AG04449 (cell line): ENCODE measurements at regions of chr12 and their contacts with region 1.

Region 1: DNA sequence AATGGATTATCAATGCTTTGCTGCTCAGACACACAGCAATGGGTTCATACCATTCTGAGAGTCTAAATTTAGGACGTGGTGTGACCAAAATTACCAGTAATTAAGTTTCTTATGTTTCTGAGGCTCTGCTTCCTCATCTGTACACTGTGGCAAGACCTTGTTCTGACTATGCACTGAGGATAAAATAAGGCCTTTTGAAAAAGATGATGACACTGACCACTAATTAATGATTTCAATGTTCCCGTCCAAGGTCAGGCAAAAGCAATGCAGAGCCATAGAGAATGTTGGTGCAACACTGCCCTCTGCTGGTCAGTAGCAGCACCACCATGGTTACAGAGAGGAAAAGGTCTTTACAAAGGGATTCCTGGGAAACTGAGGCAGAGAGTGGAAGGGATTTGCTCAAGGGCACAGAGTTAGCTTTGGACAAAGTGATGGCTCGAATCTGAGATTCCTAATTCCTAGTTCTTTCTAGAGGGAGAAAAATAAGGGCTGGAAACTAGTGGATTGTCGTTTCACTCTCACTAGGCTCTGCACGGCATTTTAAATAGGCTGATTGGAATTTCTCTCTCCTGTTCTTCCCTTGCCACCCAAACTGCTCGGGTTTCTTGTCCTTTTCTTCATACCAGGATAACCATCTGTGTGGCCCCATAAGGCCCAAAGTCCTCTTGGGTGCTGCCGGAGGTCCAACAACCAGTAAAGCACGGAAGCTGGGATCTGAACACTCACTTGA is 22.3 kb upstream of the P2RX7 start:
- DNase-seq: no peak
- H3K4me3 ChIP-seq: no peak overlapping the region
- CTCF ChIP-seq: peak; percentile 85

Region 2: GRCh38 chr12:120904197-120904773 is 206.1 kb before region 1 on chr12 and contains the start of gene SPPL3:
- CTCF ChIA-PET with region 1: no interaction called
- POLR2A ChIA-PET with region 1: no interaction called
- DNase-seq: no peak
- H3K4me3 ChIP-seq: peak within 1 kb of the TSS; percentile 75
- CTCF ChIP-seq: no peak

Region 3: DNA sequence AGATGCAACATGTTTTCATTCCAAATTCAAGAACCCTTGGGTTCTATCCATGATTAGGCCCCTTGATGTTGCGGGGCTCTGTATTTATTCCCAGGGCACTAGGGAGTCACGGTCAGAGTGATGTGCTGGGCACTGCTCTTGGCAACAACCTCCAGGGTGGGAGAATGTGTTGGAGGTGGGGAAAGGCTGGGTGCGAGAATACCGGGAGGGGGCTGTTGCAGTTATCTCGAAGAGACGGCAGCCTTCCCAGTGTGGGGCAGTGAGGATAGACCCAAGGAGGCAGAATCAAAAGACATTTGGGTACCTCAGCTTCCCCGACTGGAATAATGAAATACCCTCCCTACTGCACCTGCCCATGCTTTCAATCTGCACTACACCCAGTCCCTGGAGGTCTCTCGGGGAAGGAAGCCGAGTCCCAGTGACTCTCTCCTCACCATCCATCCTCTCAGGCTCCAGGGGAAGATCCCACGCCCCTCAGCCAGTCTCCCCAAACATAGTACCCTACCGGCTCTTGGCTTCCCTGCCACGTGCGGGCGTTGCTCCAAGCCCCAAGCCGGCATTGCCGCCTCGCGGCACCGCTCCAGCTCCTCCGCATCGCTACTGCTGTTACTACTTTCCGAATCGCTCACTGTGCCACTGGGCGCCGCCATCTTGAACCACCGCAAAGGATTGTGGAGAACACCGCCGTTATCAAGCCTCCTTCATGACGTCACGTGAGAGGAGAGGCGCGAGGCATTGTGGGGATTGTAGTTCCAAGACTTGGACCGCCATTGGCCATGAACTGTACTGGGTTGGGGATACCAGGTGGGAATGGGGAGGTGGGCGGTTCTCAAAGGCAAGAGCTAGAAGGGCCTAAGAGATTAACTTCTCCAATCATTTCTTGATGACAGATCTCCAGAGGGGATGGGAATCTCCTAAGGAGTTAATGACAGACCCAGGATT is 94.3 kb before region 1 on chr12 and contains the start of gene C12orf43:
- CTCF ChIA-PET with region 1: no interaction called
- POLR2A ChIA-PET with region 1: no interaction called
- DNase-seq: peak; percentile 26
- H3K4me3 ChIP-seq: peak within 1 kb of the TSS; percentile 98
- CTCF ChIP-seq: no peak

Region 4: GRCh38 chr12:121060149-121061001 is 50.0 kb before region 1 on chr12:
- CTCF ChIA-PET with region 1: interaction called, 15 read pairs
- POLR2A ChIA-PET with region 1: no interaction called
- DNase-seq: no peak
- H3K4me3 ChIP-seq: peak overlapping the region; percentile 42
- CTCF ChIP-seq: peak; percentile 65

Region 5: GRCh38 chr12:121095544-121096198 is 14.7 kb before region 1 on chr12:
- CTCF ChIA-PET with region 1: interaction called, 25 read pairs
- POLR2A ChIA-PET with region 1: no interaction called
- DNase-seq: no peak
- H3K4me3 ChIP-seq: peak overlapping the region; percentile 53
- CTCF ChIP-seq: peak; percentile 90